PC-9 (cell line): ENCODE measurements at regions of chr21 and their contacts with region 1.

Region 1: DNA sequence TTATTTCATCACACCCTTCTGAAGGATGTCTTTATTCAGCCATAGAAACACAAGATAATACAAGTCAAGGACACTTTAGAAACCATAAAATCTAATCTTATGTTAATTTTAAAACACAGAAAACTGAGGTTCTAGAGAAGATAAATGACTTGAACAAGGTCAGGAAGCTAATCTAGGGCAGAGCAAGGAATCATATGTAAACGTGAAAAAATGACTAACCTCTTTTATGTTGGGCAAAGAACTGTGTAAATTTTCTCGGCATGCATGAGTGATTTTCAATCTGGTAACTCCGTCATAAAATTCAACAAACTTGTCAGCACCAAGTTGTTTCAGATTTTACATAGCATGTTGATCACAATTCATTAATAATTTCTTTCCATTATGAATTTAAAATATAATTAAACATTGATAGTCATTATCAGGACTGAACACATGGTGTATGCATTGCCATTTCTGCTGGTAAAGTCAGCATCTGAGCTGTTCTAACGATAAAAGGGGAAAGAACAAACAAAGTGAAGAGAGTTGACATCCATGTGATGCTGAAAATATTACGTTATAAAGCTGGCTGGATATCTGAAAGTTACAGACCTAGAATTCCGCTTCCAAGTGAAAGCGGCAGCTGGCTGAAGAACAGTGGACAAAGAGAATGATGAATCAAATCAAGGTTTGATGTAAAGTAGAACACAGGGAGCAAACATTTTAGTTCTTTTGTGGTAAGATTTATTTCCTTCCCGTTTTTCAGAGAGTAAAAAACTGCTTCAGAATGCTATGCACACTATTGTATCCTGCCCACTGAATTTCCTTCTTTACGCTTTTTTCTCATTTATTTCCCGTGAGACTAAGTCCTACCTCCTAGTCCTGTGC is 1037.4 kb upstream of the TMPRSS15 start:
- DNase-seq: no peak
- H3K4me3 ChIP-seq: no peak overlapping the region
- H3K27ac ChIP-seq: no peak overlapping the region
- H3K4me1 ChIP-seq: no peaks in the 10 kb centered on the region
- H3K27me3 ChIP-seq: no peaks in the 10 kb centered on the region
- CTCF ChIP-seq: no peak

Region 2: DNA sequence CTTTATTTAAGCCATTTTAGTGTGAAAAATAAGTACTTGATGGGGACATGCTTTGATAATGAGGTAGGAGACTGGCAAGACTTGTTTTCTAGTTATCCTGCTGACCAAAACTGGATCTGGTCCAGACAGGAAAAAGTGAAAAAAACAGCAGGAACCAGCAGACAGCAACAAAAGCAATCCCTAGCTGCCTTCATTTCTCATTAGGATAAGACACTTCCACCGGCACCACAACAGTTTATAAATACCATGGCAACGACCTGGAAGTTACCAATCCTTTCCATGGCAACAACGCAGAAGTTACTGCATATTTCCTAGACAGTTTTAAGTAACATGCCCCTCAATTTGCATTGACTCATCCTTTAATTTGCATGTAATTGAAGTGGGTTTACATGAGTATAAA is 563.3 kb after region 1 on chr21:
- CTCF ChIA-PET with region 1: no interaction called
- POLR2A ChIA-PET with region 1: no interaction called
- intact Hi-C with region 1: no loop called
- DNase-seq: no peak
- H3K4me3 ChIP-seq: no peak overlapping the region
- H3K27ac ChIP-seq: no peak overlapping the region
- H3K4me1 ChIP-seq: no peaks in the 10 kb centered on the region
- H3K27me3 ChIP-seq: no peaks in the 10 kb centered on the region
- CTCF ChIP-seq: no peak

Region 3: GRCh38 chr21:21383126-21383525 is 1942.1 kb after region 1 on chr21:
- CTCF ChIA-PET with region 1: no interaction called
- POLR2A ChIA-PET with region 1: interaction called, 10 read pairs
- intact Hi-C with region 1: no loop called
- DNase-seq: no peak
- H3K4me3 ChIP-seq: no peak overlapping the region
- H3K27ac ChIP-seq: no peak overlapping the region
- H3K4me1 ChIP-seq: no peaks in the 10 kb centered on the region
- H3K27me3 ChIP-seq: no peaks in the 10 kb centered on the region
- CTCF ChIP-seq: no peak